Activated CD4-positive, alpha-beta T cell treated with anti-CD3 and anti-CD28 coated beads, Interleukin-2, amount 10 ng/mL, durations not matched to agents 7 days and 5 days (primary cell): ENCODE measurements at regions of chr6 and their contacts with region 1.

Region 1: DNA sequence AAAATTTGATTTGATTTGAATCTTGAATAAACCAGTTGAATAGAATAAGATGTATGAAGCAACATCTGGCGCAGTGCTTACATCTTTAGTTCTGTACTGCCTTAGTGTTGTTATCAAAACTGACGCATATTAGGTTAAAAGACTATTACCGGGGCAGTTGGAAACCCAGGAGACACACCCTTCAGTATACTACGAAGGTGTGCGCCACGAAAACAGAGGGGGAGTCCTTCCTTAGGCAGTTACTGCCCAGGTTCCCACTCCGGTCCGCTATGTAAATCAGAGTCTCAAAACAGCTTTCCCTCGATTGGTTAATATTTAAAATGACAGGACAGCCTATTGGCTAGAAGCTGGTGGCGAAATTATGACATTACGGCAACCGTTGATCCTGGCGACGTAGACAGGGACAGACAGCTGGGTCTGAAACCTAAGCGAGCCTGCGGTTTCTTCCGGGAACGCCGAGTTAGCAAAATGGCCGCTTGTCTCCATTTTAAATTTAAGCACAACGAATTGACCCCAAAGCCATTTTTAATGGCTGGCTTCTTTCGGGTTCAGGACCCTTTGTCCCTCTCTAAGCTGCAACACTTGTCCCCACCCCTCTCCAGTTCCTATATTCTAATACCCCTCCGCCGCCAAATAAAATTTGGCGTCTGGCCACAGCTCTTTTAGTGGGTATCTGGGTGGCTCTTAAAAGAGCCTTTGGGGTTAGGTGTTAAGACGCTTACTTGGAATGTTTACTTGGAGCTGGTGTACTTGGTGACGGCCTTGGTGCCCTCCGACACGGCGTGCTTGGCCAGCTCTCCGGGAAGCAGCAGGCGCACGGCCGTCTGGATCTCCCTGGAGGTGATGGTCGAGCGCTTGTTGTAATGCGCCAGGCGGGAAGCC is 35.8 kb downstream of the HFE start:
- DNase-seq: peak; percentile 98
- H3K4me3 Mint-ChIP-seq: peak overlapping the region; percentile 100
- H3K27ac Mint-ChIP-seq: peak overlapping the region; percentile 99
- H3K4me1 Mint-ChIP-seq: peaks cover 35% of the 10 kb centered on the region
- H3K27me3 Mint-ChIP-seq: peaks cover 4% of the 10 kb centered on the region

Region 2: DNA sequence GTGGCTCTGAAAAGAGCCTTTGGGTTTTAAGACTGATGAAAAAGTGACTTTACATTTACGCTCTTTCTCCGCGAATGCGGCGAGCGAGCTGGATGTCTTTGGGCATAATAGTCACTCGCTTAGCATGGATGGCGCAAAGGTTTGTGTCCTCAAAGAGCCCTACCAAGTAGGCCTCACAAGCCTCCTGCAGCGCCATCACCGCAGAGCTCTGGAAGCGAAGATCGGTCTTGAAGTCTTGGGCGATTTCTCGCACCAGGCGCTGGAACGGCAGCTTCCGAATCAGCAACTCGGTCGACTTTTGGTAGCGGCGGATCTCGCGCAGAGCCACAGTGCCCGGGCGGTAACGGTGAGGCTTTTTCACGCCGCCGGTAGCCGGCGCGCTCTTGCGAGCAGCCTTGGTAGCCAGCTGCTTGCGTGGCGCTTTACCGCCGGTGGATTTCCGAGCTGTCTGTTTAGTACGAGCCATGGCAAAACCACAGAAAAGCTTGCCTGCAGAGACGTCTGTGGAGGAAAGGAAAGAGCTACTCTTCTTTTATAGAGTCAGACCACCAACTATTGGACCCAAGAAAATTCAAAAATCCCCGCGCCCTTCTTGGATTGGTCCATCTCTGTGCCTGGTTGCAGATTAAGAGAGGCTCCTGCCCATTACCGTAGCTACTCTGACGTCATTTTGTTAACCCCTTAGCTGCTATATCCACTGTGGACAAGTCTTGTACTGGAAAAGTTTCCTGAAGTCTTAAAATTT is 91.3 kb before region 1 on chr6:
- CTCF ChIA-PET with region 1: interaction called, 9 read pairs
- POLR2A ChIA-PET with region 1: interaction called, 59 read pairs
- DNase-seq: peak; percentile 96
- H3K4me3 Mint-ChIP-seq: peak overlapping the region; percentile 96
- H3K27ac Mint-ChIP-seq: peak overlapping the region; percentile 100
- H3K4me1 Mint-ChIP-seq: peaks cover 79% of the 10 kb centered on the region
- H3K27me3 Mint-ChIP-seq: peaks cover 3% of the 10 kb centered on the region

Region 3: GRCh38 chr6:26103770-26104456 is 19.1 kb before region 1 on chr6:
- CTCF ChIA-PET with region 1: interaction called, 7 read pairs
- POLR2A ChIA-PET with region 1: interaction called, 50 read pairs
- DNase-seq: peak; percentile 92
- H3K4me3 Mint-ChIP-seq: peak overlapping the region; percentile 84
- H3K27ac Mint-ChIP-seq: peak overlapping the region; percentile 99
- H3K4me1 Mint-ChIP-seq: peaks cover 25% of the 10 kb centered on the region
- H3K27me3 Mint-ChIP-seq: peaks cover 2% of the 10 kb centered on the region

Region 4: DNA sequence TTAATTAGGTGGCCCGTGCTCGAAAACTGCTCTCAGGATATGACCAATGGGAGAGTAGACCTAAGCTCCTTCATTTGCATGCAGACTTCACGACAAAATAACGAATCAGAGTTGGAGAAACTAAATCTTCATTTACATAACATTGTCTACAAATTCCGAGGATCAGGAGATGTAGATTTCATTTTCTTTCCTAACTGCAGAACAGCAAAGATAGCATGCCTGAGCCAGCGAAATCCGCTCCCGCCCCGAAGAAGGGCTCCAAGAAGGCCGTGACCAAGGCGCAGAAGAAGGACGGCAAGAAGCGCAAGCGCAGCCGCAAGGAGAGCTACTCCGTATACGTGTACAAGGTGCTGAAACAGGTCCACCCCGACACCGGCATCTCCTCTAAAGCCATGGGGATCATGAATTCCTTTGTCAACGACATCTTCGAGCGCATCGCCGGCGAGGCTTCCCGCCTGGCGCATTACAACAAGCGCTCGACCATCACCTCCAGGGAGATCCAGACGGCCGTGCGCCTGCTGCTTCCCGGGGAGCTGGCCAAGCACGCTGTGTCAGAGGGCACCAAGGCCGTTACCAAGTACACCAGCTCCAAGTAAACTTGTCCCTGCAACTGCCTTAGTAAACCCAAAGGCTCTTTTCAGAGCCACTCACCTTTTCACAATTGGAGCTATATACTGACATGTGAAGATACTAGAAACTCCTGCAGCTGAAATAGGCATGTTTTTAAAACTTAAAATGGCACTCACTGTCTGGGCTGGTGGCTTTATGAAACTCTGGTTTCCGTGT is 60.7 kb after region 1 on chr6:
- CTCF ChIA-PET with region 1: interaction called, 3 read pairs
- POLR2A ChIA-PET with region 1: interaction called, 34 read pairs
- DNase-seq: peak; percentile 75
- H3K4me3 Mint-ChIP-seq: peak overlapping the region; percentile 91
- H3K27ac Mint-ChIP-seq: peak overlapping the region; percentile 99
- H3K4me1 Mint-ChIP-seq: peaks cover 73% of the 10 kb centered on the region
- H3K27me3 Mint-ChIP-seq: no peaks in the 10 kb centered on the region

Region 5: GRCh38 chr6:26234421-26235296 is 111.6 kb after region 1 on chr6:
- CTCF ChIA-PET with region 1: no interaction called
- POLR2A ChIA-PET with region 1: interaction called, 30 read pairs
- DNase-seq: peak; percentile 86
- H3K4me3 Mint-ChIP-seq: peak overlapping the region; percentile 85
- H3K27ac Mint-ChIP-seq: peak overlapping the region; percentile 100
- H3K4me1 Mint-ChIP-seq: peaks cover 54% of the 10 kb centered on the region
- H3K27me3 Mint-ChIP-seq: no peaks in the 10 kb centered on the region

Region 6: DNA sequence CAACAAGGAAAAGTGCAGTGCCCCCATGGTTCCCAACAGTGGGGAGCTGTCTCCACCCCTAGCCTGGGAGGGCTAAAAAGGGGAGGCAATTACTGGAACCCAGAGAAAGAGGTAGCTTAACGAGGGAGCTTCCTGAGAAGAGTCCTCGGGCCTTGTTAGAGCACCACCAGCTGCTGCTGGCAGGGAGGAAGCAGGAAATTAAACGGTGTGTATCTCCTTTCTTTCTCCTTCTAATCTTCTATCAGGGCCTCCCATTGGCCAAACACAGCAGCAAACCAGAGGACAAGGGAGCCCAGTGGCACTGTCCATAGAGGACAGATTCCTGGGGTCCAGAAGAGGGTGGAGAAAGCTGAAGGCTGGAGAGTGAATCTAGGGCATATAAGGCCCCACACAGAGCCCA is 252.2 kb after region 1 on chr6:
- CTCF ChIA-PET with region 1: no interaction called
- POLR2A ChIA-PET with region 1: no interaction called
- DNase-seq: no peak
- H3K4me3 Mint-ChIP-seq: no peak overlapping the region
- H3K27ac Mint-ChIP-seq: peak overlapping the region; percentile 76
- H3K4me1 Mint-ChIP-seq: peaks cover 23% of the 10 kb centered on the region
- H3K27me3 Mint-ChIP-seq: no peaks in the 10 kb centered on the region

Region 7: DNA sequence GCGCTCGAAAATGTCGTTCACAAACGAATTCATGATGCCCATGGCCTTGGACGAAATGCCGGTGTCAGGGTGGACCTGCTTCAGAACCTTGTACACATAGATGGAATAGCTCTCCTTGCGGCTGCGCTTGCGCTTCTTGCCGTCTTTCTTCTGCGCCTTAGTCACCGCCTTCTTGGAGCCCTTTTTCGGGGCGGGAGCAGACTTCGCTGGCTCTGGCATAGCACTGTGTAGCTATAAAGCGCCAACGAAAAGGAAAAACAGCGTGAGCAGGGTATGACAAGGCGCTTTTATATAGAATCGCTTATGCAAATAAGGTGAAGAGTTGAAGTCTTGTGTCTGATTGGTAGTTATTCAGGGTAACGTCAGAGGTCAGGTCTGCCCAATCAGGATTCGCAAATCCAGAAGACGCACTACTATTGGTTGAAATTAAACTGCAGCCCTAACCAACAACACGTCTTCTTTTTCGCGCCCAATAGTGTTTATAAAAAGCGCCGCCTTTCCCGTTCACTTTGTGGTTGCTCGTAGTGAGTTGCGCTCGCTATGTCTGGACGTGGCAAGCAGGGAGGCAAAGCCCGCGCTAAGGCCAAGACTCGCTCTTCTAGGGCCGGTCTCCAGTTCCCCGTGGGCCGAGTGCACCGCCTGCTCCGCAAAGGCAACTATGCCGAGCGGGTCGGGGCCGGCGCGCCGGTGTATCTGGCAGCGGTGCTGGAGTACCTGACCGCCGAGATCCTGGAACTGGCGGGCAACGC is 1009.7 kb after region 1 on chr6:
- CTCF ChIA-PET with region 1: no interaction called
- POLR2A ChIA-PET with region 1: interaction called, 14 read pairs
- DNase-seq: peak; percentile 94
- H3K4me3 Mint-ChIP-seq: no peak overlapping the region
- H3K27ac Mint-ChIP-seq: no peak overlapping the region
- H3K4me1 Mint-ChIP-seq: peaks cover 66% of the 10 kb centered on the region
- H3K27me3 Mint-ChIP-seq: no peaks in the 10 kb centered on the region